ENCODE measurements at regions of chr15 and their contacts with region 1.

Region 1: GRCh38 chr15:39890621-39891020 is 29.4 kb downstream of the GPR176 start:
- DNase-seq: no peak
- H3K4me3 ChIP-seq: no peak overlapping the region
- H3K27ac ChIP-seq: no peak overlapping the region
- H3K4me1 ChIP-seq: no peaks in the 10 kb centered on the region
- H3K27me3 ChIP-seq: no peaks in the 10 kb centered on the region
- CTCF ChIP-seq: no peak
- POLR2A ChIP-seq: no peak

Region 2: DNA sequence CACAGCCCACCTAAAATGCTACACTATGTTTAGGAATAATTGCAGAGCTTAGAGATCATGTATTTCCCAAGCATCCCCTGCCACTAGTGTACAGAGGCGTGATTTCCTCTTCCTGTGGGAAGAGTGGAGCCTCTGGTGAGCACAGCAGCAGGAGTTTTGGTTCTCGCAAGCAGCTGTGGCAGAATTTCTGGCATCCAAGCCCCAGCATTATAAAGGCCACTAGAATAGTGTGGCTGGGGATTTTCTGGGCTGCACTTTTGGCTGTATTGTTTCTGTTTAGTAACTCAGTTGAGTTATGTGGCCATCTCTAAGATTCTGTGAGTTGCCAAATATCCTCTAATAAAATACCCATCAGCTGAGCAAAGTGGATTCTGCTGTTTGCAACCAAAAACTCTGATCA is 35.2 kb before region 1 on chr15:
- intact Hi-C with region 1: loop called (anchors 1 kb)
- DNase-seq: no peak
- H3K4me3 ChIP-seq: no peak overlapping the region
- H3K27ac ChIP-seq: no peak overlapping the region
- H3K4me1 ChIP-seq: peaks cover 10% of the 10 kb centered on the region
- H3K27me3 ChIP-seq: no peaks in the 10 kb centered on the region
- CTCF ChIP-seq: no peak
- POLR2A ChIP-seq: no peak